Lower leg skin (tissue), 4 donors: ENCODE measurements at regions of chr3 and their contacts with region 1.

Region 1: GRCh38 chr3:154095832-154096421 is 25.3 kb upstream of the ARHGEF26 start:
- DNase-seq: no peak
- H3K4me3 ChIP-seq: no peak overlapping the region
- CTCF ChIP-seq: no peak
- POLR2A ChIP-seq: no peak

Region 2: DNA sequence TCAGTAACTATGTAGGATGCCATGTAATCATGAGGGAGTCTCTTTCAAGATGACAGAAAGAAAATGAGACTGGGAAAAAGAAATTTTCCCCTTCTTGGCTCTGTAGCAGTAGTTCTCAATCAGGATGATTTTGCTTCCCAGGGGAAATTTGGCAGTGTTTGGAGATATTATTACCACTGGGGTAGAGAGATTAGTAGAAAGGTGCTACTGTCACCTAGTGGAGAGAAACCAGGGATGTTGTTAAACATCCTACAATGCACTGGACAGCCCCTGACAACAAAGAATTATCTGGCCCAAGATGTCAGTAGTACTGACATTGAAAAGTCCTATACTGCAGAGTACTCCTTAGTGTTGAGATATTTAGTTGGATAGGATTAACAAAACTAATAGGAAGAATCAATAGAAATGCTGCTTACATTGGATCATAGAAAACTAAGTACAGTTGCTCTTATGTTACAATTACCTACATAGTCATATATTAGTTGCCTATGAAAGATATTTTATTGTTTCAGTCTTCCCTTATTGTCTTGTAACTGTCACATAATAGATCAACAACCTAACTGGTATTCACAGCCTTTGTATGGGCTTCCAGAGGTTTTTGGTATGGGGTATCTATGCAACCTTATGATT is 500.6 kb before region 1 on chr3:
- intact Hi-C with region 1: no loop called
- DNase-seq: no peak
- H3K4me3 ChIP-seq: no peak overlapping the region
- CTCF ChIP-seq: no peak
- POLR2A ChIP-seq: no peak

Region 3: DNA sequence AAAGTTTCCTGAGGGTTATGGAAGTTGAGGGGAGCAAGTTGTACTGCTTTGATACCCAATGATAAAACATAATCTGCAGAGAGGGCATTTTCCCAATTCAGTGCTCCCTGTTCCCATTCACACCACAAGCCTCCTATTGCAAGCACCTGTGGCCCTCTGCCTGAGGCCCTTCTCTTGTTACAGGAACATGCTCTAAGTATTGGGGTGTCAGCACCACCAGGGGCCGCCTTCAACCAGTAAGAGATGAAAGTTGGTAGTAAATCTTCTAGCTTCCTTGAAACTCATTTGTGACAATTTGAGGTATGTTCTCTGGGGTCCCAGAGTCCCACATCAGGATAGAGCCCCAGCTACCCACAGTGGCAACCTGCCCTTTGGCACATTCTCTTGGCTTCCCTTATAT is 240.2 kb before region 1 on chr3:
- intact Hi-C with region 1: no loop called
- DNase-seq: no peak
- H3K4me3 ChIP-seq: no peak overlapping the region
- CTCF ChIP-seq: no peak
- POLR2A ChIP-seq: no peak

Region 4: GRCh38 chr3:154132777-154133375 is 36.9 kb after region 1 on chr3:
- intact Hi-C with region 1: no loop called
- DNase-seq: no peak
- H3K4me3 ChIP-seq: no peak overlapping the region
- CTCF ChIP-seq: no peak
- POLR2A ChIP-seq: no peak

Region 5: GRCh38 chr3:154252759-154253638 is 157.1 kb after region 1 on chr3:
- intact Hi-C with region 1: loop called (anchors 10 kb)
- DNase-seq: peak; percentile 87 to 96
- H3K4me3 ChIP-seq: no peak overlapping the region
- CTCF ChIP-seq: peak in 1 of 3 donors; percentile 84
- POLR2A ChIP-seq: no peak